Vagina (tissue), 2 donors: ENCODE measurements at regions of chr1 and their contacts with region 1.

Region 1: GRCh38 chr1:198201956-198202784 is 45.4 kb downstream of the NEK7 start:
- DNase-seq: no peak
- H3K4me3 ChIP-seq: no peak overlapping the region
- H3K27ac ChIP-seq: no peak overlapping the region
- H3K4me1 ChIP-seq: peaks cover 66% of the 10 kb centered on the region
- H3K27me3 ChIP-seq: no peaks in the 10 kb centered on the region
- CTCF ChIP-seq: no peak
- POLR2A ChIP-seq: no peak

Region 2: GRCh38 chr1:197696372-197696771 is 505.8 kb before region 1 on chr1:
- intact Hi-C with region 1: loop called (anchors 5 kb)
- DNase-seq: no peak
- H3K4me3 ChIP-seq: no peak overlapping the region
- H3K27ac ChIP-seq: no peak overlapping the region
- H3K4me1 ChIP-seq: no peaks in the 10 kb centered on the region
- H3K27me3 ChIP-seq: no peaks in the 10 kb centered on the region
- CTCF ChIP-seq: no peak
- POLR2A ChIP-seq: no peak

Region 3: GRCh38 chr1:198238121-198238520 is 36.0 kb after region 1 on chr1:
- intact Hi-C with region 1: loop called (anchors 2 kb)
- DNase-seq: no peak
- H3K4me3 ChIP-seq: no peak overlapping the region
- H3K27ac ChIP-seq: no peak overlapping the region
- H3K4me1 ChIP-seq: peaks cover 19% of the 10 kb centered on the region
- H3K27me3 ChIP-seq: no peaks in the 10 kb centered on the region
- CTCF ChIP-seq: no peak
- POLR2A ChIP-seq: no peak